Vagina (tissue), 2 donors: ENCODE measurements at regions of chr1 and their contacts with region 1.

Region 1: GRCh38 chr1:31977385-31978131 is 36.1 kb upstream of the KHDRBS1 start:
- DNase-seq: no peak
- H3K4me3 ChIP-seq: no peak overlapping the region
- H3K27ac ChIP-seq: peak overlapping the region; percentile 70
- H3K4me1 ChIP-seq: peaks cover 19% of the 10 kb centered on the region
- H3K27me3 ChIP-seq: no peaks in the 10 kb centered on the region
- CTCF ChIP-seq: peak in 1 of 3 experiments; percentile 24
- POLR2A ChIP-seq: no peak

Region 2: DNA sequence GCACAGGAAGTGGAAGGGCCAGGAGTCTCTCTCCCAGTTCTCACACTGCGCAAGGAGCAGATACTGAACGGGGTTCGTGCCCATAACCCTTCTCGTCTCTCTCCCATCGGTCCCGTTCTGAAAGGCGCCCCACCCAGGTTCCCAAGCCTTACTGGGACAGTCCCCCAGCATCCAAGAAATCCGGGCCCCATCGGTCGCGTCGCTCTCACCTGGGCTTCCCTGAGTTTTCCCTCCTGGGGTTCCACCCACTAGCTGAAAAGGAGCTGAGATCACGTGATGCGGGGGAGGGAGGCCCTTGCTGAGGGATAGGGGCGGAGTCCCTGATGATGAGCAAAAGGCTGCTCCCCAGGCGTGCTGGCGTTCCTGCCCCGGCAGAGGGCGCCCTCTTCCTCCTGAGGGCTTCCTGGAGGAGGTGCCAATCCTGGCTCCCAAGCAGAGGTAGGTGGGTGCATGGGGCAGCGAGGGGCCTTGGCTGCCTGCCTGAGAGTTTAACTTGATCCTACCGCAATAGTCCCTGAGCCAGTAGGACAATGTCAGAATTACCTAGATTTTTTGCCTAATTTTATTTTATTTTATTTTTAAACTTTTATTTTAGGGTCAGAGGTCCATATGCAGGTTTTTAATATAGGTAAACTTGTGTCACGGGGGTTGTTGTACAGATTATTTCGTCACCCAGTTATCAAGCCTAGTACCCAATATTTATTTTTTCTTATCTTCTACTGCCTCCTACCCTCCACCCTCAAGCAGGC is 161.6 kb before region 1 on chr1 and contains the start of gene SPOCD1:
- intact Hi-C with region 1: no loop called
- DNase-seq: peak in 1 of 2 donors; percentile 94
- H3K4me3 ChIP-seq: no peak within 1 kb of the TSS
- H3K27ac ChIP-seq: no peak within 1 kb of the TSS
- H3K4me1 ChIP-seq: no peaks in the 10 kb centered on the region
- H3K27me3 ChIP-seq: no peaks in the 10 kb centered on the region
- CTCF ChIP-seq: peak in 2 of 3 experiments; percentile 21 to 52
- POLR2A ChIP-seq: no peak
- total RNA-seq, gene SPOCD1: 4.2 TPM

Region 3: DNA sequence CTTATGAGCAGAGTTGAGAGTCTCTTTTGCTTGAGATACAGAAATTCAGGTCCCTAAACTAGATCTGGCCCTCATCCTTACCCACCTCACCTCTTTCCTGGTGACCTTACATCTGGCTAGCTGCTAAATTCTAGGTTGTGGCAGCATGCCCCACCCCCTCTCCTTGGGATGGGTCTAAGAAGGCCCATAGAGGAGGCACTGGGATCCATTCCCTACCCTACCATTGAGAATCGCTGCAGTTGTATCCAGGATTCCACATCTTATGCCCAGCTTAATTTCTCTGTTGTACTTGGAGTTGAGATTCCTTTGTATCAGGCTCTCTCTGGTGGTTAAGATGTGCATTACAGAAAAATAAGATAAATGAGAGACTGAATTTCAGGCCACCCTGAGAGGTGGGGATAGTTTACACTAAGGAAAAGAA is 85.7 kb after region 1 on chr1:
- intact Hi-C with region 1: loop called (anchors 10 kb)
- DNase-seq: no peak
- H3K4me3 ChIP-seq: no peak overlapping the region
- H3K27ac ChIP-seq: peak overlapping the region; percentile 69
- H3K4me1 ChIP-seq: peaks cover 28% of the 10 kb centered on the region
- H3K27me3 ChIP-seq: no peaks in the 10 kb centered on the region
- CTCF ChIP-seq: peak in 2 of 3 experiments; percentile 63 to 67
- POLR2A ChIP-seq: no peak

Region 4: DNA sequence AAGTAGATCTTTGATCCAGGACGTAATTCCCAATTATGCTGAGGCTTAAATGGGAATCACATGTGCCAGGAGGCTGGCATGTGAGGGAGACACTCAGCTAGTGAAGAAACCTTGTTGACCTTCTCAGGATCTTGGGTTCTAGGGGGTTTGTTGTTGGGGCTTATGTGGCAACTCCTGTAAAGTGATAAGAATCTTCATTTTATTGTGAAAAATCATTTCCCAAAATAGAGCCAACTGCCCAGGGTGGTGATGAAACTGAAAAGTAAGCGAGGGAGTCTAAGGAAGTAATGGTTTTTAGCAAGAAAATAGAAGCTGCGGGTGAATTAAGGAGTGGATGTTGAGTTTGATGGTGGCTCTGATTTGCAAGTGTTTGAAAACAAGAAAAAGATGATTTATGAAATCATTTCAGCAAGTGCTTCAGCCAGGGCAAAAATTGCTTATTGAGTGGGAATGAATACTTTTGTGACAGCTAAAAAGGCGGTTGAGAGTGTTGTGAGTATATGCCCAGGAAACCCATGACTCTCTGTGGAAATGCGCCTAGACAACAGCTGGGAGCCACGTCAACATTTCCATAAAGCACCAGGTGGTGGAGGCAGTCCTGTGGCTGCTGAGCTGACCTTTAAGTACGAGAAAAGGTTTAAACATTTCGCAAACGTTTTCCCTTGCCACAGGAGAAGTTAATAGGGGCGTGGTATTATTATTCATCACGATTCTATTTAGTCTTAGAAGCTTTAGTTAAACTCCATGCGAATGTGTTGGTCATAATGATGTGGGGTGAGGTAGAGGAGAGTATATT is 1989.0 kb after region 1 on chr1:
- intact Hi-C with region 1: loop called (anchors 10 kb)
- DNase-seq: no peak
- H3K4me3 ChIP-seq: no peak overlapping the region
- H3K27ac ChIP-seq: no peak overlapping the region
- H3K4me1 ChIP-seq: no peaks in the 10 kb centered on the region
- H3K27me3 ChIP-seq: no peaks in the 10 kb centered on the region
- CTCF ChIP-seq: no peak
- POLR2A ChIP-seq: no peak